PC-9 (cell line): ENCODE measurements at regions of chr18 and their contacts with region 1.

Region 1: DNA sequence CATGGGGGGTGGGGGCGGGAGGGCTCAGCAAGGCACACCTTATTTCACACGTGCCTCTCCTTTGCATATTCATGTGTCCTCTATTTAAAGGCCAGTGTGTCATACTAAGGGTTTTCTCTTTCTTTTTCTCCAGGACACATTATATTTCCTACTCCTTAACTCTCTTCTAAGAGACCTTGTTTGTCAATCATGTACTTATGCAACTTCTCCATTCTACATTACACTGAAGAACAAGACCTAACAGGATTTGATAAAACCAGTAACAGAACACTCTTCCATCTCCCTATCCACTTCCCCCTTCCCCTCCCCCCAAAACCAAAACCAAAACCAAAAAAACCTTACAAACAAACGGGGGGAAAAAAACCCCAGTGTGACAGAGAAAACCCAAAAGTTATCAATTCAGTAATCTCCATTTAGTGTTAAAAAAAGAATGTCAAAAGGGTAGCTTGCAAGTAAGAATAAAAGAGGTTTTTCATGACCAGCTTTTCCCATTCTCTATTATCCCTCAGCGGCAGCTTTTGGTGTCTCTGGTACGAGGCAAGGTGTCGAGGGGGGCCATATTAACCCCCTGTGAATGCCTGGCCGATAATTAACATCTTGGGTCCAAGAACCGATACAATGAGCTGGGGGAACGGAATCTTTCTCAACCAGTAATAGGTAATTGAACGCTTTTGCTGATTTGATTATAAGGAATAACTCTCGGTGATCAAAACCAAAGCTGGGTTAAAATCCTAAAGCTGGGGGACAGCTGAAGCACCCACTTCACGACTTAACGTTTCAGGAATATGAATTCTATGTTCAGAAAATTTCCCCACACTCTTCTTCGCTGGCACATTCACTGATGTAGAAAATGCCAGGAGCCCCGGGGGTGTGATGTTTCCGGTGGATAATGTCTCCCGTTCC is 191.0 kb upstream of the TCF4 start:
- DNase-seq: no peak
- H3K4me3 ChIP-seq: no peak overlapping the region
- H3K27ac ChIP-seq: no peak overlapping the region
- H3K4me1 ChIP-seq: no peaks in the 10 kb centered on the region
- H3K27me3 ChIP-seq: no peaks in the 10 kb centered on the region
- CTCF ChIP-seq: no peak

Region 2: DNA sequence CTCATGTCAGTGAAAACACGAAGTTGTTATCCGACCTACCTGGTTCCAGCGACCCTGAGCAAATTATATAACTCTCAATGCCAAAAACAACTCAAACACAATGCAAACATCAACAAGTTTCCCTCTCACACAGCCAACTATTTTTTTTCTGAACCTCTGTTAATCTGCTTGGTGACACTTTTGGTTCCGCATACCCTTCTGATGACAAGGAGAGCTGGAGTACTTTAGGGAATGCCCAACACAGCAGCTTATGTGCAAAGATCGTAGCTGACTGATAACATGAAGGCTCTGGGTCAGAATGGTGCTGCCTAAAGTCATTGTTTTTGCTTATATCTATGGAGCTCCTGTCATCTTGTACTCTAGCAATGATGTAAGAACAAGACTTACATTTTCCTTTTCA is 747.1 kb before region 1 on chr18:
- CTCF ChIA-PET with region 1: no interaction called
- POLR2A ChIA-PET with region 1: interaction called, 10 read pairs
- intact Hi-C with region 1: no loop called
- DNase-seq: peak; percentile 50 to 81
- H3K4me3 ChIP-seq: no peak overlapping the region
- H3K27ac ChIP-seq: peak overlapping the region; percentile 39
- H3K4me1 ChIP-seq: no peaks in the 10 kb centered on the region
- H3K27me3 ChIP-seq: no peaks in the 10 kb centered on the region
- CTCF ChIP-seq: no peak

Region 3: GRCh38 chr18:55907453-55908175 is 128.6 kb after region 1 on chr18:
- CTCF ChIA-PET with region 1: no interaction called
- POLR2A ChIA-PET with region 1: no interaction called
- intact Hi-C with region 1: no loop called
- DNase-seq: no peak
- H3K4me3 ChIP-seq: no peak overlapping the region
- H3K27ac ChIP-seq: 0 out of 2 replicates have a peak overlapping the region, but pooled peaks have one; percentile 12
- H3K4me1 ChIP-seq: peaks cover 9% of the 10 kb centered on the region; the same call in 1 of the 2 replicates
- H3K27me3 ChIP-seq: no peaks in the 10 kb centered on the region
- CTCF ChIP-seq: no peak